ENCODE measurements at regions of chr2 and their contacts with region 1.

Region 1: DNA sequence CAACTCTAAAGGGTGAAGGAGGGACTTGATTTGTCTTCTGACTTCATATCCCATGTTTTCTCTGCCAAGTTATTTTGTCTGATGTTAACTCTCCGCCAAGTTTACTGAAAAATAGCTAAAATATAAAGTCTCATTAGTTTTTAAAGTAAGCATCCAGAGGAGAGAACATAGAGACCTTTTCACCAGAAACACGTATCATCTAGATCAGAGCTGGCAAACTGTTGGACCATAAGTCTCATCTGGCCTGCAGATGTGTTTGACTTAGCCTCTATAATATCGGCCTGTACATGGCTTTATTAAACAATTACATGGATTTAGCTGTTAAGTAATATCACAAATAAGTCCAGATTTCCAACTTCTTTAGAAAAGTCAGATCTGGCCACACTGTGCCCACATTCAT is 182.6 kb downstream of the PLCL1 start:
- DNase-seq: no peak
- ATAC-seq: no peak
- H3K4me3 ChIP-seq: no peak overlapping the region
- H3K27ac ChIP-seq: no peak overlapping the region
- H3K4me1 ChIP-seq: no peaks in the 10 kb centered on the region
- H3K27me3 ChIP-seq: no peaks in the 10 kb centered on the region
- CTCF ChIP-seq: no peak
- POLR2A ChIP-seq: no peak
- RAD21 ChIP-seq: no peak

Region 2: GRCh38 chr2:198028955-198029354 is 42.0 kb after region 1 on chr2:
- CTCF ChIA-PET with region 1: no interaction called
- POLR2A ChIA-PET with region 1: no interaction called
- dilution Hi-C with region 1: no loop called
- in situ Hi-C with region 1: no loop called
- intact Hi-C with region 1: loop called (anchors 1 kb)
- DNase-seq: no peak
- ATAC-seq: no peak
- H3K4me3 ChIP-seq: no peak overlapping the region
- H3K27ac ChIP-seq: no peak overlapping the region
- H3K4me1 ChIP-seq: no peaks in the 10 kb centered on the region
- H3K27me3 ChIP-seq: no peaks in the 10 kb centered on the region
- CTCF ChIP-seq: no peak
- POLR2A ChIP-seq: no peak
- RAD21 ChIP-seq: no peak

Measured in IMR-90 (cell line).